ENCODE measurements at regions of chr17 and their contacts with region 1.

Region 1: DNA sequence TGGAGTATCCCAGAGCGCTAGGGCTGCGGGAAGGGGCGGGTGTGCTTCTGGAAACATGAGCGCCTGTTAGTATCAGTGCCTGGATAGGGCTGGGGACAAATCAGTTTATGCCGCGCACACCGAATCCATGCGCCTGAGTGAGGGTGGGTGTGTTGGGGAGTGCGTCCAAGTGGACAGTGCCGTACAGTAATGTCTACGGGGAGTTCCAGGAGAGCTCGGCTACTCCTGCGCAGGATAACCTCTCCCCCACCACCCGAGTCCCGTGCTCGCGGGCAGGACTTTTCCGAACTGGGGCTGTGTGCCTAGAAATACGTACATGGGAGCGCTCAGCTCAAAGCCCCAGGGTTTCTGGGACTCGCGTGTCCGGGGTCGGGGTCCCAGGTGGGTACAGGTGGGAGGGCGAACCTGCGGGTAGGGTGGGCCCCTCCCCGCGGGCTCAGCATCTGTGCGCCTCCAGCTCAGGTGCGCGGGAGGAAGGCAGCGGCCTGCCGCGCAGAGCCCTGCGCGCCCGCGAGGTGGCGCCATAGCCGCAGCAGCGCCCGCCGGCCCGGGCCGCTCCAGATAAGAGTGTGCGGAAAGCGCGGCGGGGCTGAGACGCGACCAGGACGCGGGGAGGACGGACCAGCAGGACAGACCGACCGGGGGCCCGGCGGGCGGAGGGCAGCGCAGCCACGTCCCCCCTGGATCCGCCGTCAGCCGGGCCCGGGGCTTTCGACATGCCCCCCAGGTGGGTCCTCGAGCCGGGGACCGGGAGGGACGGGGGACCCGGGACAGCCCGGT is at the start of gene HIC1:
- DNase-seq: peak in 2 of 3 donors; percentile 71 to 74
- H3K4me3 ChIP-seq: peak within 1 kb of the TSS; percentile 23 to 66 (median 56)
- H3K27ac ChIP-seq: no peak within 1 kb of the TSS
- H3K4me1 ChIP-seq: peaks cover 0 to 77% (median 71%) of the 10 kb centered on the region in 4 experiments
- H3K27me3 ChIP-seq: peaks cover 0 to 76% (median 21%) of the 10 kb centered on the region in 5 experiments

Region 2: DNA sequence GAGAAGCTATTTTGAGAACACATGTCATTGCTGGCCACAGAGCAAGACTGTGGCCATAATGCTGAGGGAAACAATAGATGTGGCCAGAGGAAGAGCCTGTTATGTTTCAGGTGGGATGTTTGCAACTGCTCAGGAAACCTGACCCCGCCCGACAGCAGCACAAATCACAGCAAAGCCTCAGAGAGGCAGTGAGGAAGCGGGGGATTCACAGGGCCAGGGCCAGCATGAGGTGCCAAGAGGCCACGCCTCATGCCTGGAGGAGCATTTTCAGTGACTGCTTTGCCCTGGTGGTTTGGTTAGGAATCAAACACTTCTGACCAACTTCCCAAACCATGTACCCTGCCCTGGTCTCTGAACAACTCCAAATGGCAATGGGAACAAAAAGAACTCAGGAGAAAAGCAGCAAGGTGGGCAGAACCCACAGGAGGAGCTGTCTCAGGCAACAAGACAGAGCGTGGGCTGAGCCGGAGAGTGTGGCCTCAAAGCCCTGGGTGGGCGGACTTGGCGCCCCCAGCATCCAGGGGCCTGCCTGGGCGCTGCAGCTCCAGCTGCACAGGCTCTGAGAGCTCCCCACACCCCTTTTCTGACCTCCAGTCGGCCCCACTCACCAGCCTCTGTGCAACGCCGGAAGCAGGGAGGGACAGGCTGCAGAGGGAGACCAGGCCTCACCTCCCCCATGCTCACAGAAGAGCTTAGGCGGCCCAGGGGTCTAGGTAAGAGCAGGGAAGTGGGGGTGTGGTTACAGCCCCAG is 20.8 kb after region 1 on chr17:
- CTCF ChIA-PET with region 1: interaction called, 26 read pairs
- POLR2A ChIA-PET with region 1: no interaction called
- DNase-seq: peak in 1 of 3 donors; percentile 40
- H3K4me3 ChIP-seq: peak overlapping the region in 1 of 7 experiments; percentile 5
- H3K27ac ChIP-seq: no peak overlapping the region
- H3K4me1 ChIP-seq: peaks cover 2 to 36% (median 20%) of the 10 kb centered on the region in 4 experiments
- H3K27me3 ChIP-seq: no peaks in the 10 kb centered on the region

Region 3: DNA sequence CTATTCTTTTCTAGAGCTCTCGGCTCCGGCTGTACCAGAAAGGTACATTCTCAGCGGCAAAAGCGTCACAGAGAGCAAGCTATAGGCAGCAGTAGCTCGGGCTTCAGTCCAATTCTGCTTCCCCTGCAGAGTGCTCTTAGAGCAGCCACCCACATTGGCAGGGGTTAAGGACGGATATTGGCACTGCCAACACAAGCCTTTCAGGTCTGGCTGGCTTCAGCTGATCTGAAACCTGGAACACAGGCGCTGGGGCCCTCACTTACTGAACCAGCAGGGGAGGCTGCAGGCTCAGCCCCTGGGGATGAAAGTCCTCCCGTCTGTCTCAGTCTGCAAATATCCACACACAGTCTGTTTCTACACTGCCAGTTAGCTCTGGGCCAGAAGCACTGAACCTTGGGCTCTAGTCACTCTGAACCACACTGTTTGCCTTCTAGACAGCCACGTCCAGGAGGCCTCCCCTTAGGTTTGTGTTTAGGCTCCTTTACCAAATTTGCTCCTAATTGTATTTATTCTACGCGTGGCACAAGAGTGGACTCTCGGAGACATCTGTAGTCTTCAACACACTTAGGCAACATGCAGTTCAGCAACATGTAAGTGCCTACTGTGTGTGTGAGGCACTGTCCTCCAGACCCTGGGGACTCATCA is 40.3 kb after region 1 on chr17:
- CTCF ChIA-PET with region 1: interaction called, 42 read pairs
- POLR2A ChIA-PET with region 1: interaction called, 4 read pairs
- DNase-seq: peak in 2 of 3 donors; percentile 47 to 48
- H3K4me3 ChIP-seq: no peak overlapping the region
- H3K27ac ChIP-seq: no peak overlapping the region
- H3K4me1 ChIP-seq: peaks cover 6 to 15% (median 8%) of the 10 kb centered on the region in 4 experiments
- H3K27me3 ChIP-seq: no peaks in the 10 kb centered on the region

Region 4: GRCh38 chr17:2111719-2112118 is 57.0 kb after region 1 on chr17:
- CTCF ChIA-PET with region 1: no interaction called
- POLR2A ChIA-PET with region 1: no interaction called
- DNase-seq: no peak
- H3K4me3 ChIP-seq: no peak overlapping the region
- H3K27ac ChIP-seq: no peak overlapping the region
- H3K4me1 ChIP-seq: no peaks in the 10 kb centered on the region
- H3K27me3 ChIP-seq: no peaks in the 10 kb centered on the region

Region 5: DNA sequence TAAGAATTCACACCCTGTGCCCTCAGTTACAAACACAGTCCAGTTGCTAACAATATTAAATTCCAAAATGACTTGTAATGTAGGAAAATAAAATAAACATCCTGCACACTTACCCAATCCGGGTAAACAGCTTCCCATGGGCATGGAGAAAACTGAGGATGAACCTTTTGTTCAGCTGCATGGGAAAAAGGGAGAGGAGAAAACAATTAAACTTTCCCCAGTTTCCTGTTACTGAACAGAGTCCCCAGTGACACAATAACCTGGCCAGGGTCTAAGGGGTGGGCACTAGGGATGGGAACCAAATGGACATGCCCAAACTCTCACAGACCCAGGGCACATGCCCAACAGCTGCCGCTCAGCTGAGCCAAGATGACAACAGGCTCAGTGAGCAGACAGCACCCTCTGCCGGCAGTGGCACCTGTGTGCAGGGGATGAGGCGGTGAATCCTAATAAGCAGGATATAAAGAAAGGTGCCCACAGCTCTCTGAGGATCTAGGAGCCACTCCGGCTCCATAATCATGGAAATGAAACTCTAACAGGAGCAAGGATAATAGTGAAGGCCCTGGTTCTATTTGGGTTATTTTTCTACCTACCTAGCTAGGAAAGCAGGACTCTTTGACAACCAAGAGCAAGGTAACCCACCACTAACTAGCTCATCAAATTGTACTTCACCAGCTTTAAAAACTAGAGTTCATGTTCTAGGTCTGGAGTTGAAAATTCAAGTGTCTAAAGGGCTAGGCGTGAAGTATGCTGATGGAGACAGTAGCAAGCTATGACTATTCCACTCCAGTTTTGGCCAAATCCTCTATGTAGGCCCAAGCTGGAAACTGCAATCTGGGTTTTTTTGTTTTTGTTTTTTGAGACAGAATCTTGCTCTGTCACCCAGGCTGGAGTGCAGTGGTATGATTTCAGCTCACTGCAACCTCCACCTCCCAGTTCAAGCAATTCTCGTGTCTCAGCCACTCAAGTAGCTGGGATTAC is 190.1 kb after region 1 on chr17:
- CTCF ChIA-PET with region 1: interaction called, 108 read pairs
- POLR2A ChIA-PET with region 1: interaction called, 3 read pairs
- DNase-seq: peak; percentile 70 to 85 (median 79)
- H3K4me3 ChIP-seq: no peak overlapping the region
- H3K27ac ChIP-seq: no peak overlapping the region
- H3K4me1 ChIP-seq: no peaks in the 10 kb centered on the region
- H3K27me3 ChIP-seq: no peaks in the 10 kb centered on the region

Region 6: GRCh38 chr17:2259769-2260536 is 205.3 kb after region 1 on chr17:
- CTCF ChIA-PET with region 1: interaction called, 17 read pairs
- POLR2A ChIA-PET with region 1: interaction called, 3 read pairs
- DNase-seq: peak in 2 of 3 donors; percentile 47 to 54
- H3K4me3 ChIP-seq: peak overlapping the region in 1 of 7 experiments; percentile 23
- H3K27ac ChIP-seq: peak overlapping the region in 1 of 2 experiments; percentile 12
- H3K4me1 ChIP-seq: peaks cover 0 to 22% (median 14%) of the 10 kb centered on the region in 4 experiments
- H3K27me3 ChIP-seq: no peaks in the 10 kb centered on the region